ENCODE measurements at regions of chr3 and their contacts with region 1.

Region 1: GRCh38 chr3:43503067-43503728 is 118.6 kb downstream of the ANO10 start:
- DNase-seq: no peak
- H3K4me3 Mint-ChIP-seq: no peak overlapping the region
- H3K27ac Mint-ChIP-seq: no peak overlapping the region
- H3K4me1 Mint-ChIP-seq: peaks cover 34% of the 10 kb centered on the region
- H3K27me3 Mint-ChIP-seq: no peaks in the 10 kb centered on the region

Region 2: GRCh38 chr3:42831321-42831713 is 671.9 kb before region 1 on chr3:
- intact Hi-C with region 1: loop called (anchors 5 kb)
- DNase-seq: peak; percentile 59
- H3K4me3 Mint-ChIP-seq: no peak overlapping the region
- H3K27ac Mint-ChIP-seq: no peak overlapping the region
- H3K4me1 Mint-ChIP-seq: peaks cover 9% of the 10 kb centered on the region
- H3K27me3 Mint-ChIP-seq: peaks cover 11% of the 10 kb centered on the region

Region 3: GRCh38 chr3:43105596-43106292 is 397.5 kb before region 1 on chr3 and contains the start of gene POMGNT2:
- intact Hi-C with region 1: loop called (anchors 2 kb)
- DNase-seq: peak; percentile 82
- H3K4me3 Mint-ChIP-seq: peak within 1 kb of the TSS; percentile 72
- H3K27ac Mint-ChIP-seq: no peak within 1 kb of the TSS
- H3K4me1 Mint-ChIP-seq: peaks cover 12% of the 10 kb centered on the region
- H3K27me3 Mint-ChIP-seq: peaks cover 4% of the 10 kb centered on the region
- total RNA-seq, gene POMGNT2: 8.3 and 9.8 TPM in 2 replicates

Region 4: GRCh38 chr3:43223670-43224364 is 279.4 kb before region 1 on chr3:
- intact Hi-C with region 1: loop called (anchors 1 kb)
- DNase-seq: no peak
- H3K4me3 Mint-ChIP-seq: no peak overlapping the region
- H3K27ac Mint-ChIP-seq: no peak overlapping the region
- H3K4me1 Mint-ChIP-seq: peaks cover 45% of the 10 kb centered on the region
- H3K27me3 Mint-ChIP-seq: no peaks in the 10 kb centered on the region

Region 5: DNA sequence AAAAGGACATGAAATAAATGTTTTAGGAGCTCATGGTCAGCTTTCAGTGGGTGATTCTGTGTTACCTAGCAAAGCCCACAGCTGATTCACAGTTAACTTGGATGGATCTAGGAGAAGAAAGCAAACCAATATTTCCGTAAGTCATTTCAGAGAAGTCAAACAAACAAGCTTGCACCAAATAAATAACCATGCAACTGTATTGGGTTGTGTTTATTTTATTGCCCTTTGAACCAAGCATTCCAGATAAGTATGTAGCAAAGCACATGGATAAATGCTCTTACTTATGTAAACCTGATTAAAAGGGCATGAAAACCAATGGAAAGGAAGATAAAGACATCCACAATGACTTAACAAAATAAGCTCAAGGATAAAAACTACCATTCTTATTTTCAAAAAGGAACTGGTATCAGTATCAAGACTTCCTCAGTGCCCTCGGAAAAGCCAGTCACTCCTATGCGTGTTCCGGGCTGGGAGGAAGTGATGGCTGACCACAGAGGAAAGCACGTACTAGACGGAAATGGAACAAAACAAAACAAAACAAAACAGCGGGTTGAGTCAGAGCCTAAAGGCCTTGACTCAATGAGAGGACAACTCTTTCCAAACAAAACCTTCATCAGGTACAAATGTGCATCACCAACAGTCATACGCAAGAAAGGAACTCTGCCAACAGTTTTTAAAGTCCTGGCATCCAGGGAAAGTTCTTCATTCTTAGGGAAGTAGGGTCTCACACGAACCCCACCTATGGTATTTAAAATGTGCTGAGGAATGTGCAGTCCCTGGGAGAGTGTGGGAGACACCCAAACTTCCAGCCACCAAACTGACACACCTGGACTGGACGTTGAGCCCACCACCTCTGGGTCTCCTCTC is 113.6 kb before region 1 on chr3:
- intact Hi-C with region 1: loop called (anchors 2 kb)
- DNase-seq: peak; percentile 72
- H3K4me3 Mint-ChIP-seq: peak overlapping the region; percentile 35
- H3K27ac Mint-ChIP-seq: peak overlapping the region; percentile 81
- H3K4me1 Mint-ChIP-seq: peaks cover 52% of the 10 kb centered on the region
- H3K27me3 Mint-ChIP-seq: peaks cover 6% of the 10 kb centered on the region

Measured in activated T-helper 1 cell treated with anti-CD3 and anti-CD28 coated beads, Interleukin-12 subunit alpha, Interleukin-12 subunit beta, Interleukin-2, Interleukin-4 antibody, amounts not matched to agents 30 ng/mL and 10 ng/mL and 1 ng/mL, durations not matched to agents 14 hours and 24 hours and 36 hours (primary cell).